Prostate gland (tissue), 2 donors: ENCODE measurements at regions of chr7 and their contacts with region 1.

Region 1: GRCh38 chr7:25851332-25852210 is 300.4 kb upstream of the NFE2L3 start:
- DNase-seq: peak; percentile 85
- H3K4me3 ChIP-seq: no peak overlapping the region
- H3K27ac ChIP-seq: peak overlapping the region in 1 of 2 donors; percentile 5
- H3K4me1 ChIP-seq: peaks cover 14% of the 10 kb centered on the region
- H3K27me3 ChIP-seq: peaks cover 15% of the 10 kb centered on the region
- CTCF ChIP-seq: peak; percentile 74 to 93 (median 86)
- POLR2A ChIP-seq: no peak

Region 2: DNA sequence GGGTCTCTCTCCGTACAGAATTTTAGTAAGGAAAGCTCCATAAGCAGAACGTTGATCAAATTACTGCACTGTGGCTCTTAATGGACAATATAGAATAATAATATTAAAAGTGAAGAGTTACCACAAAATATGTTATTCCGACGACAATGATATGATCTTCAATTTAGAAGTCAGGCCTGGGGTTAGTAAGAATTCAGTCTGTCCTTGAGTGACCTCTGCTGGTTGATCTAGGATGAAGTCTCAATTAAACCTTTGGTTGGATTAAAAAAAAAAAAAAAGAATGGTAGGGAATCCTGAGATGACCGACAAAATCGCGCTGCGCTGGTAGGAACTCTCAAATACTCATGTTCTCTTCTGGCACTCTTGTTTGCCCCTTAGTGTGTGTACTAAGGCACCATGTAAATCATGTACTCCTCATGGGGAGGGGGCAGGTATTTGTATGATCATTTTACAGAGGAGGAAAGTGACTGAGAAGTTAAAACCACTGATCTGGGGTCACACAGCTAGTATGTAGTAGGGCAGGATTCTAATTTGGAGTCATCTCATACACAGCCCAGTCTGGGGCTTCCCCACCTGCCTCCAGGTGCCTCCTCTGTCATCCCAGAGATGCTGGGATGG is 462.0 kb before region 1 on chr7:
- intact Hi-C with region 1: loop called (anchors 2 kb)
- DNase-seq: no peak
- H3K4me3 ChIP-seq: no peak overlapping the region
- H3K27ac ChIP-seq: no peak overlapping the region
- H3K4me1 ChIP-seq: peaks cover 4% of the 10 kb centered on the region
- H3K27me3 ChIP-seq: no peaks in the 10 kb centered on the region
- CTCF ChIP-seq: peak; percentile 60 to 86 (median 68)
- POLR2A ChIP-seq: no peak

Region 3: DNA sequence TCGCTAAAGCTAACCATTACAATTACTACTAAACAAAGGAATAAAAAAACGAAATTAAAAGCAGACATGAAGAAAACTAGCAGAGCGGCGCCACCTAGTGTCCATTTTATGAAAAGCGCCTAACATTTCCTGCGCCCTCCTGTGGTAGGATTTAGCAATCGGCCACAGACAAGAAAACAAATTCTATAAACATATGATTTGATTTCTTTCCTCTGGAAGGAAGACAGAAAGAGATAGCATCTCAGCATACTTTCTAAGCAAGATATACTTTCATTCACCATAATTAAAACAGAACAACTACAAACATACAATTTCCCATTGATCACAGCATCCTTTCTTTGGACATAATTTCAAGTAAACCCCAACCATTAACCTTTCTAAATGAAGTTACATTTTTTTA is 285.6 kb before region 1 on chr7:
- intact Hi-C with region 1: loop called (anchors 2 kb)
- DNase-seq: peak; percentile 40
- H3K4me3 ChIP-seq: no peak overlapping the region
- H3K27ac ChIP-seq: no peak overlapping the region
- H3K4me1 ChIP-seq: no peaks in the 10 kb centered on the region
- H3K27me3 ChIP-seq: no peaks in the 10 kb centered on the region
- CTCF ChIP-seq: peak; percentile 99 to 100 (median 99)
- POLR2A ChIP-seq: no peak

Region 4: GRCh38 chr7:25675789-25676474 is 175.6 kb before region 1 on chr7:
- intact Hi-C with region 1: no loop called
- DNase-seq: peak; percentile 80
- H3K4me3 ChIP-seq: no peak overlapping the region
- H3K27ac ChIP-seq: peak overlapping the region; percentile 39 to 65
- H3K4me1 ChIP-seq: no peaks in the 10 kb centered on the region
- H3K27me3 ChIP-seq: no peaks in the 10 kb centered on the region
- CTCF ChIP-seq: peak in 1 of 4 experiments; percentile 16
- POLR2A ChIP-seq: no peak

Region 5: DNA sequence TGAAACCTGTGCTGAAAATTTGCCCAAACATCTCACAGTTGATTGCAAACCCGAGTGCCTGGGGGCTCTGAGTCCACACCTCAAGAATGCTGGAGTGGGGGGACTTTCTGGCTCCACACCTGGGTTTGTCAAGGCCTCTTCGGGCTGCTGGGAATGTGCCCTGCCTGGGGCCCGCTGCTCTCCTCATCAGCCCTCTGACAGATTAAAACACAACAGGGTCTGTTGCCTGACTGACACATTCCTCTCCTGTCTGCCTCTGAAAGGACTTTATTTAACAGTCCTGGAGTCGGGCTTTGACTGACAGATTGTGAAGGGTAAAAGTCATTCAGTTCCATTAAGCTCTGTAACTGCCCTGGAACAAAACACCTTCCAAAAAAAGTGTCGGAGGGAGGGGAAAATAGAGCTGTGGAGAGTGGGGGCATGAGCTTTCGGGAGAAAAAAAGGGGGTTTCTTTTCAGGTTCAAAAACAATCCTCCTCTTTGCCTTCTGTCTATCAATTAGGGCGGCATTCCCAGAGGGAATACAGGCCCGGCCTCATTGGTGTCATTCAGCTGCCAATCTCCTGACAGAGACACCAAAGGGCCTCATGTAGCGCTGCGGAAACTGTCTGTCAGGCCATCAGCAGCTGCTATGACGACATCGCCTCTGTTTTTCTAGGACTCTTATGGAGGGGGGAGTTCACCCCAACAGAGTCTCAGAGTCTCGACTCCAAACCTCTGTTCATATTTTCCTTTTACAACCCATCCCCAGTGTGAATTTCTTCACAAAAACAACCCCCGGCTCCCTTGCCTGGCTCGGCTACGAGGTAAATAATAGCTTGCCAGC is 98.4 kb before region 1 on chr7:
- intact Hi-C with region 1: loop called (anchors 10 kb)
- DNase-seq: no peak
- H3K4me3 ChIP-seq: no peak overlapping the region
- H3K27ac ChIP-seq: peak overlapping the region in 1 of 2 donors; percentile 49
- H3K4me1 ChIP-seq: no peaks in the 10 kb centered on the region
- H3K27me3 ChIP-seq: no peaks in the 10 kb centered on the region
- CTCF ChIP-seq: no peak
- POLR2A ChIP-seq: no peak